ENCODE measurements at regions of chr6 and their contacts with region 1.

Region 1: GRCh38 chr6:49849213-49849907 is 17.0 kb downstream of the CRISP1 start:
- DNase-seq: no peak
- ATAC-seq: peak in 1 of 4 donors; percentile 68
- H3K4me3 ChIP-seq: no peak overlapping the region
- H3K27ac ChIP-seq: no peak overlapping the region
- H3K4me1 ChIP-seq: no peaks in the 10 kb centered on the region
- H3K27me3 ChIP-seq: no peaks in the 10 kb centered on the region
- CTCF ChIP-seq: peak; percentile 68

Region 2: DNA sequence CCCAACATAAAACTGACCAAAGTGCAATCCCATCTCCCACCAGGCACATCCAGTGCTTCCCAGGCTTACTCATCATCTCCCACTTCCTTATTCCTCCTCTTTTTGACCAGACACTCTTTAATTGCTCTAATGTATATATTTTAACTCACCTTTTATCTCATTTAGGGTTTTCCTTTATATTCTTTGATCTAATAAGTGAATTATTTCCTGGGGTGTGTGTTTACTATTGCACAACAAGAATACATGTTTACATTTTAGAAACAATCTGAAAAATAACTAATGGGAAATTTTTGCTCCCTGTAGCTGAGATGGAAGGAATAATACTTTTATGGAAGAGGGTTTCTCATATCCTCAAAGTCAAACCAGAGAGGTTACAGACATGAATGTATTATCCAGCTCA is 231.1 kb before region 1 on chr6:
- intact Hi-C with region 1: loop called in 1 of 2 experiments (anchors 10 kb)
- DNase-seq: no peak
- ATAC-seq: no peak
- H3K4me3 ChIP-seq: no peak overlapping the region
- H3K27ac ChIP-seq: no peak overlapping the region
- H3K4me1 ChIP-seq: no peaks in the 10 kb centered on the region
- H3K27me3 ChIP-seq: no peaks in the 10 kb centered on the region
- CTCF ChIP-seq: no peak

Region 3: GRCh38 chr6:49739423-49739822 is 109.9 kb before region 1 on chr6:
- intact Hi-C with region 1: no loop called
- DNase-seq: no peak
- ATAC-seq: no peak
- H3K4me3 ChIP-seq: no peak overlapping the region
- H3K27ac ChIP-seq: no peak overlapping the region
- H3K4me1 ChIP-seq: no peaks in the 10 kb centered on the region
- H3K27me3 ChIP-seq: no peaks in the 10 kb centered on the region
- CTCF ChIP-seq: no peak